WTC11 (cell line): ENCODE measurements at regions of chr2 and their contacts with region 1.

Region 1: DNA sequence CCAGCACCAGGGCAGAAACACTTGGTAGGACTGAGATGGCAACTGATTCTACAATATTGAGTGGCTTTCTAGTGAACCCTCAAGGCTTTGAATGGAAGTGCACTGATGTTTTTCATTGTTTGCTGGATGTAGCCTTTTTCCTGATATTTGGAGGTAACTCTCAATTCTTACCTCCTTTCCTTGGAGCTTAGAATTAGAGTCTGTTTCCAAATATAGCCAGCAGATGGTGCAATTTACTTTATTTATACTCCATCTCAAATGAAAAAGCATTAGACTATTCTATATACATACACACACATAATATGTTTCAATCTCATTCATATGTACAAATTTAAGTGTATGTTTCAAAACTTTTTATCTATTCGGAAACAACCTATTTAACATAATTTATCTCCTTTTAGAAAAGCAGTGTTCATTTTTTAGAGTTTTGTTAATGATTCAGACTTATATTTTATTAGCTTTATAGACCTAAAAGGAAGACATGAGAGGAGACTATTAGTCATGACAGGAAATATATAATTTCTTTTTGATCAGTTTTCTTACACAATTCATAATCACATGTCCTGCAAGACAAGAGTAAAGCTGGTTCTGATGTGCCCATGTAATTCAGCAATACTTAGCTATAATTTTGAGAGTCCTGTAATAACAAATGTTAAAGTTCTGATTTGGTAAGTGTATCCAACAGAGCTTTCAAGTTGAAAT is 124.8 kb downstream of the NUP35 start:
- DNase-seq: no peak
- ATAC-seq: peak; percentile 36
- H3K4me3 Mint-ChIP-seq: no peak overlapping the region
- H3K27ac Mint-ChIP-seq: no peak overlapping the region
- H3K4me1 Mint-ChIP-seq: peaks cover 9% of the 10 kb centered on the region
- H3K27me3 Mint-ChIP-seq: no peaks in the 10 kb centered on the region
- CTCF ChIP-seq: peak; percentile 46; the same call in 1 of the 2 replicates

Region 2: GRCh38 chr2:182784777-182785176 is 464.2 kb before region 1 on chr2:
- CTCF ChIA-PET with region 1: no interaction called
- POLR2A ChIA-PET with region 1: no interaction called
- DNase-seq: no peak
- ATAC-seq: peak; percentile 70
- H3K4me3 Mint-ChIP-seq: no peak overlapping the region
- H3K27ac Mint-ChIP-seq: no peak overlapping the region
- H3K4me1 Mint-ChIP-seq: peaks cover 3% of the 10 kb centered on the region; the same call in 1 of the 2 replicates
- H3K27me3 Mint-ChIP-seq: no peaks in the 10 kb centered on the region
- CTCF ChIP-seq: 0 out of 2 replicates have a peak, but pooled peaks have one; percentile 26

Region 3: DNA sequence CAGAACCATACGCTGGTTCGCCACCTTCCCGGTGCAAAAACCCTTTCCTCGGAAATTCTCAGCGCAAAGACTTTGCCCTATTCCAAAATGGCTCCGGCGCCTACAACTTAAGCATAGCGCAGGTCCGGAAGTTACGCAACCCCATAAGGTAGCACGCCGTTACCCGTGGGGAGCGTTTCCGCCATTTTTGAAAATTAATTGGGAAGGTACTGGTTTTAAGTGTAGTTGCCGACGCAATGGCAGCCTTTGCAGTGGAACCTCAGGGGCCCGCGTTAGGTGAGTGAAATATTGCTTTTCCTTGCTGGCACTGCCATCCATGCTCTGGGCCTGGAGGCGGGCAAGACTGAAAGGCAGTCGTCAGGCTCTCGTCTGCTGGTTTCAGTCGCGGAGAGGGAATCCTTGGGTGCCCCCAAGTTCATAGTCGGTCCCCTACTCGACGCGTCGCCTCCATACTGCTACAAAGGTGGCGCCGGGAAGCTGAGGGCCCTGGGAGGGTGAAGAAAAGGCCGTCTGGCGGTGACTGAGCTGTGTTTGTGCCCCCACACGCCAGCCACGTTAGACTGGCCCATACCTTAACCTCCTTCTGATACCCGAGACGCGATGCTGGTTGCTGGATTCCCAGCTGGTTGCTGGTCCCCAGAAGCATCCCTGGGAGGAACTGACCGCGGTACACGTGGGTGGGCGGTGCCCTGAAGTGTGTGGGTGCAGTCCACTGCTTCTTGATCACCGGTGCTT is 124.6 kb before region 1 on chr2 and contains the start of gene NUP35:
- CTCF ChIA-PET with region 1: no interaction called
- POLR2A ChIA-PET with region 1: no interaction called
- DNase-seq: peak; percentile 85
- ATAC-seq: peak; percentile 86
- H3K4me3 Mint-ChIP-seq: peak within 1 kb of the TSS; percentile 96
- H3K27ac Mint-ChIP-seq: peak within 1 kb of the TSS; percentile 99
- H3K4me1 Mint-ChIP-seq: peaks cover 29% of the 10 kb centered on the region
- H3K27me3 Mint-ChIP-seq: no peaks in the 10 kb centered on the region; the same call in 1 of the 2 replicates
- CTCF ChIP-seq: no peak
- total RNA-seq, gene NUP35: 39.5 to 47.2 TPM (median 40.4 TPM) in 3 replicates

Region 4: DNA sequence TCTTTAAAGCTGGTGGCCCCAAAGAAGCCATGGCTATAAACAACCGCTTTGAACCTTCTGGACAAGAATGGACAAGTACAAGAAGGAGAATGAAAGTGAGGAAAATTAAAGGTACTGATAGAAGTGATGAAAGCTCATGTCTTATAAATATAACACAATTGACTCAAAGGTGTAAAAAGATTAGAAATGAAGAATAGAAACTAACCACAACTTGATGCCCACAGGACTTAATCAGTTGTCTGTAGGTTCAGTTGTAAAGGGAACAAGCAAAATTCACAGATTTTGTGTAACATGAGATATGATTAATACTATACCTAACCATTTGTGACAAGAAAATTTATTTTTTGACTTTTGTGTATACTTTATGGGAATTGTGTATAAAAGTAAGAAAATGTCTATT is 10.9 kb after region 1 on chr2:
- CTCF ChIA-PET with region 1: interaction called, 15 read pairs
- POLR2A ChIA-PET with region 1: interaction called, 3 read pairs
- DNase-seq: no peak
- ATAC-seq: no peak
- H3K4me3 Mint-ChIP-seq: no peak overlapping the region
- H3K27ac Mint-ChIP-seq: no peak overlapping the region
- H3K4me1 Mint-ChIP-seq: peaks cover 11% of the 10 kb centered on the region
- H3K27me3 Mint-ChIP-seq: 0 out of 2 replicates have a peak, but pooled peaks cover 3% of the 10 kb centered on the region
- CTCF ChIP-seq: no peak

Region 5: DNA sequence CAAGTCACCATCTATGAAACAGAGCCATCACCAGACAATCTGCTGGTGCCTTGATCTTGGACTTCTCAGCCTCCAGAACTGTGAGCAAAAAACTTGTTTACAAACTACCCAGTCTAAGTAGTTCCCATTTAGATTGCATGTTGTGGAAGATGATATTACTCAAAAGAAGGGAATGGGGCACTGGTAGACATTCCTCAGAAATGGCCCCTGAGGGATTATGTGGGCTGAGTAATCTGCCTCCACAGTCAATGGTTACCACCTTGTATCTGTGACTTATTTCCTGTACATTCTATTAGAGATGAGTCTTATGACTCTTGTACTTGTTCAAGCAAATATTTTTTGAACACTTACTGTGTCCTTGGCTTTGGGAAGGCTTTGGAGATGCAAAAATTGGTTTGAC is 35.6 kb after region 1 on chr2:
- CTCF ChIA-PET with region 1: interaction called, 15 read pairs
- POLR2A ChIA-PET with region 1: no interaction called
- DNase-seq: no peak
- ATAC-seq: no peak
- H3K4me3 Mint-ChIP-seq: no peak overlapping the region
- H3K27ac Mint-ChIP-seq: no peak overlapping the region
- H3K4me1 Mint-ChIP-seq: peaks cover 6% of the 10 kb centered on the region; the same call in 1 of the 2 replicates
- H3K27me3 Mint-ChIP-seq: peaks cover 74% of the 10 kb centered on the region
- CTCF ChIP-seq: no peak

Region 6: GRCh38 chr2:183292028-183292427 is 43.0 kb after region 1 on chr2:
- CTCF ChIA-PET with region 1: interaction called, 16 read pairs
- POLR2A ChIA-PET with region 1: no interaction called
- DNase-seq: no peak
- ATAC-seq: peak; percentile 86
- H3K4me3 Mint-ChIP-seq: no peak overlapping the region
- H3K27ac Mint-ChIP-seq: peak overlapping the region; percentile 13; the same call in 1 of the 2 replicates
- H3K4me1 Mint-ChIP-seq: peaks cover 16% of the 10 kb centered on the region
- H3K27me3 Mint-ChIP-seq: peaks cover 32% of the 10 kb centered on the region
- CTCF ChIP-seq: no peak